AG04449 (cell line): ENCODE measurements at regions of chr15 and their contacts with region 1.

Region 1: DNA sequence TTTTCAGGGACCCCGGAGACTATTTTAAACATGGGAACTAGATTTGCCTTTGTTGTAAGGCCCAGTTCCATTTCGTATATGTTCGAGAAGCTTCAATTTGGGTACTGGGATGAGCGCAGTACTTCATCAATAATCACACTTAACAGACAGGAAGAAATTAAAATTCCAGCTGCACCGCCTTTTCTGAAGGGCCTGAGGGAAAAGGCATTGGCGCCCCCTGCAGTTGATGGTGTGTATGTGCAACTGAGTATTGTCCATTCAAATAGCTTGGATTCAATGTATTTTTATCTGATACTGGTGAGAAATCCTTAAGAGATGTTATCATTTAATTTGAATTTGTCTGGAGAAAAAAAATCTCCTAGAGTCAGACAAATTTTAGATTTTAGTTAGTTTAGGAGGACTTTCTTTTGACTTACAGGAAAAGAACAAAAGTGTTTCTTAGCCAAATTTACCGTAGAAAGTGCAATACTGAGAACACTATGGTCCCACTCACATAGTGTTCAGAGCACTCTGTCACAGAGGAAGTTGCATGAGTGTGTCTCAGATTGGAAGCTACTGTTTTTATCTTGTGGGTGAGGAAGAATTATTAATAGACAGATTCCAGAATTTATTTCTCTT is 5.4 kb upstream of the ALDH1A2 start:
- DNase-seq: no peak
- H3K4me3 ChIP-seq: no peak overlapping the region
- CTCF ChIP-seq: peak; percentile 81

Region 2: GRCh38 chr15:57561041-57561711 is 509.7 kb before region 1 on chr15:
- CTCF ChIA-PET with region 1: interaction called, 30 read pairs
- POLR2A ChIA-PET with region 1: no interaction called
- DNase-seq: peak; percentile 10
- H3K4me3 ChIP-seq: no peak overlapping the region
- CTCF ChIP-seq: peak; percentile 87

Region 3: DNA sequence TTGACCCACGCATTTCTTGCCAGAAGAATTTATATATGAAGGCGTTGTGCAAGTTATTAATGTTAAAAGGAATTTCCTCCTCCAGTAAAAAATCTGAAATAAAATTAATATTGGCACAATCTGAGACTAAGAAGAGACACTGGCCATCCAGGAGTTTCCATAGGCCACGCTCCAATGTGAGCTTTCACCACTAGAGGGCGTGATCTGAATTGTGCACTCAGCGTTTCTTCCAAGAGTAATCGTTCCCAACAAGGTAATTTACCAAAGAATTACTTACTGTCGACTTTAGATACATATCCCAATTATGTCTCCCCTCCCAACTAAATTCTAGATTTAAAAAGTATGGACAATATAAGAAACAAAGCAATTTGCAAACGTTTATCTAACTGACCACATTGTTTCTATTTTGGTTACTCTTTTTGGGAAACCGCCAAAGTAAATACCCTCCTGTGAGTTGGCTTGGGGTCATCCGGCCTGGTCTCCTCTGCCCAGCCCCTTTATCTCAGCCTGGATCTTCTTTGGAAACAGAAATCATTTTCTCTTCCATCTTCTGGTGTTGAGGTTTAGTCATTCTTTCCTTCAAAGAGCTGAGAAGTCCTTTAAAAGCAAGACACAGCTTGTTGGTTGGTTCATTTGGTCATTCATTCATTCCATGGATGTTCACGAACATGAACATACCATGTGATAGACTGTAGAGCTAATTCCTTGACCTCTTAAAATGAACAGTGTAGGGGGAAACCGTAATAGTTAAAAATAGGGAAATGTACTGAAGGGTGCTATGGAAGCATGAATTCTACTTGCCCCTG is 338.2 kb before region 1 on chr15:
- CTCF ChIA-PET with region 1: interaction called, 240 read pairs
- POLR2A ChIA-PET with region 1: no interaction called
- DNase-seq: no peak
- H3K4me3 ChIP-seq: no peak overlapping the region
- CTCF ChIP-seq: peak; percentile 75

Region 4: GRCh38 chr15:57873564-57874209 is 197.2 kb before region 1 on chr15:
- CTCF ChIA-PET with region 1: interaction called, 190 read pairs
- POLR2A ChIA-PET with region 1: no interaction called
- DNase-seq: peak; percentile 14
- H3K4me3 ChIP-seq: no peak overlapping the region
- CTCF ChIP-seq: no peak

Region 5: DNA sequence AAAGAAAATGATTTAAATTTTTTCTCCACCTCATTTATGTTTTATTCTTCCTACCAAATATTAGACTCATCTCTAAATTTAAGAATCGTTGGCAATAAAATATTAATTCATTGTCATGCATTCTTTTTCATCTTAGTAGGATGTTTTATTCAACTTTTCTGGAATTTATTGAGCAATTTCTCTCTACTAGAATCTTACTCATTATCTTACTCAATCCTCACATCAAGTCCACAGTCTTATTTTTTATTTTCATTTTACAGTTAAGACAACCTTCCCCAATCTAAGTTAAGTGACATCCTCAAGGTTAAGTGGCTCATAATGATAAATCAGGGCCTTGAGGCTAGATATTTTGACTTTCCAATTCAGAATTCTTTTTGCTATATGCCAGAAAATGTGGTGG is 10.5 kb after region 1 on chr15:
- CTCF ChIA-PET with region 1: interaction called, 20 read pairs
- POLR2A ChIA-PET with region 1: no interaction called
- DNase-seq: no peak
- H3K4me3 ChIP-seq: no peak overlapping the region
- CTCF ChIP-seq: no peak